ENCODE measurements at regions of chr19 and their contacts with region 1.

Region 1: DNA sequence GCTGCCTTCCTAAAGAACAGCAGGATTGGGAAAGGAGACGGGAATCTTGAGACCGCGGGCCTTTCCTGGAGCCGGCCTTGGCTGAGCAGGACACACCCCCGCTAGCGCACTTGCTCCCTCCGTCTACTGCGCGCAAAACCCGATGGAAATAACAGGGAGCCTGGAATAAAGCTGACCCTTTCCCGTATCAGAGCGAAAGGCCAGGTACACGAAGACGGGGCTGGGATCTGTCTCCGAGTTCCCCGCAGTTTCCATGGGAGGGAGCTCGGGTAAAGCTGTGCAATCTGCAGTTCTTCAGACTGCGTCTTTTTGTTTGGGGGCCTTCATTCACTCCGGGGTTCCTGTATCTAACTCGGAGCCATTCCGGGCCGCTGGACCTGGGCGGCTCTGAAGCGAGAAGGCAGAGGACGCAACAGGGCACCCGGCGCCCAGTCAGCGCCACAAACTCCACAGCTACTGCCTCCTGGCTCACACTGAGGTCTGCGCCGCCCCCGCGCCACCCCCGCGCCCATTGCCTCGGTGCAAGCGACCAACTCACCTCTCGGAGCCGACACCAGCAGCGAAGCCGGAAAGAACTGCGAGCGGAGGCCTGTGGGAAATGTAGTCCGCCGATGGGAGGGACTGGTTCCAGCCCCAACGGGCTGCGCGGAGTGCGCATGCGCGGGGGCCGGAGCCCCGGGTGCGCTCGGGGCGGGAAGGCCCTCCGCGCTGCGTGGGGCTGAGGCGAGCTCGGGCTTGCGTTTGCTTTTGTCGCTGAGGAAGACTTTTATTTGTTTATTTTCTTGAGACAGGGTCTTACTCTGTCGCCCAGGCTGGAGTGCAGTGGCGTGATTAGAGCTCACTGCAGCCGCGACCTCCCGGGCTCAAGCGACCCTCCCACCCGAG is at the start of gene ZFP14:
- DNase-seq: peak; percentile 92 to 96 (median 95)
- H3K4me3 ChIP-seq: peak within 1 kb of the TSS; percentile 76 to 87
- H3K4me3 Mint-ChIP-seq: peak within 1 kb of the TSS; percentile 87 to 96 (median 94)
- H3K27ac ChIP-seq: peak within 1 kb of the TSS; percentile 76
- H3K27ac Mint-ChIP-seq: peak within 1 kb of the TSS; percentile 81 to 97 (median 93)
- H3K4me1 ChIP-seq: peaks cover 18% of the 10 kb centered on the region
- H3K4me1 Mint-ChIP-seq: peaks cover 13 to 34% (median 18%) of the 10 kb centered on the region in 4 donors
- H3K27me3 ChIP-seq: no peaks in the 10 kb centered on the region
- H3K27me3 Mint-ChIP-seq: no peaks in the 10 kb centered on the region
- total RNA-seq, gene ZFP14: 20.7 to 21.2 TPM

Region 2: GRCh38 chr19:36257520-36257876 is 121.4 kb before region 1 on chr19:
- CTCF ChIA-PET with region 1: no interaction called
- POLR2A ChIA-PET with region 1: no interaction called
- intact Hi-C with region 1: no loop called
- DNase-seq: no peak
- H3K4me3 ChIP-seq: no peak overlapping the region
- H3K4me3 Mint-ChIP-seq: no peak overlapping the region
- H3K27ac ChIP-seq: no peak overlapping the region
- H3K27ac Mint-ChIP-seq: no peak overlapping the region
- H3K4me1 ChIP-seq: no peaks in the 10 kb centered on the region
- H3K4me1 Mint-ChIP-seq: no peaks in the 10 kb centered on the region
- H3K27me3 ChIP-seq: no peaks in the 10 kb centered on the region
- H3K27me3 Mint-ChIP-seq: peaks cover 0 to 1% of the 10 kb centered on the region in 2 donors

Region 3: GRCh38 chr19:36418287-36419001 is 39.6 kb after region 1 on chr19 and contains the start of gene ZFP82:
- CTCF ChIA-PET with region 1: no interaction called
- POLR2A ChIA-PET with region 1: interaction called, 4 read pairs
- intact Hi-C with region 1: loop called (anchors 1 kb)
- DNase-seq: peak; percentile 47 to 81 (median 76)
- H3K4me3 ChIP-seq: peak within 1 kb of the TSS; percentile 71 to 82
- H3K4me3 Mint-ChIP-seq: peak within 1 kb of the TSS; percentile 81 to 93 (median 92)
- H3K27ac ChIP-seq: peak within 1 kb of the TSS; percentile 73
- H3K27ac Mint-ChIP-seq: peak within 1 kb of the TSS; percentile 78 to 97 (median 96)
- H3K4me1 ChIP-seq: peaks cover 15% of the 10 kb centered on the region
- H3K4me1 Mint-ChIP-seq: peaks cover 11 to 28% (median 20%) of the 10 kb centered on the region in 4 donors
- H3K27me3 ChIP-seq: no peaks in the 10 kb centered on the region
- H3K27me3 Mint-ChIP-seq: peaks cover 9 to 19% of the 10 kb centered on the region in 2 donors
- total RNA-seq, gene ZFP82: 8.2 to 8.6 TPM

Region 4: GRCh38 chr19:37077934-37078725 is 699.3 kb after region 1 on chr19 and contains the start of gene ZNF420:
- CTCF ChIA-PET with region 1: interaction called, 4 read pairs
- POLR2A ChIA-PET with region 1: interaction called, 5 read pairs
- intact Hi-C with region 1: loop called (anchors 1 kb)
- DNase-seq: peak; percentile 85 to 92 (median 87)
- H3K4me3 ChIP-seq: peak within 1 kb of the TSS; percentile 61 to 88
- H3K4me3 Mint-ChIP-seq: peak within 1 kb of the TSS; percentile 90 to 100 (median 98)
- H3K27ac ChIP-seq: peak within 1 kb of the TSS; percentile 73
- H3K27ac Mint-ChIP-seq: peak within 1 kb of the TSS; percentile 85 to 99 (median 95)
- H3K4me1 ChIP-seq: peaks cover 23% of the 10 kb centered on the region
- H3K4me1 Mint-ChIP-seq: peaks cover 22 to 43% (median 27%) of the 10 kb centered on the region in 4 donors
- H3K27me3 ChIP-seq: no peaks in the 10 kb centered on the region
- H3K27me3 Mint-ChIP-seq: no peaks in the 10 kb centered on the region
- total RNA-seq, gene ZNF420: 25.0 to 28.6 TPM

Region 5: GRCh38 chr19:37779127-37780005 is 1400.5 kb after region 1 on chr19 and contains the start of gene ZNF573:
- CTCF ChIA-PET with region 1: no interaction called
- POLR2A ChIA-PET with region 1: no interaction called
- intact Hi-C with region 1: loop called (anchors 1 kb)
- DNase-seq: peak; percentile 87 to 99 (median 91)
- H3K4me3 ChIP-seq: peak within 1 kb of the TSS; percentile 74 to 89
- H3K4me3 Mint-ChIP-seq: peak within 1 kb of the TSS; percentile 90 to 99 (median 94)
- H3K27ac ChIP-seq: peak within 1 kb of the TSS; percentile 90
- H3K27ac Mint-ChIP-seq: peak within 1 kb of the TSS; percentile 86 to 100 (median 98)
- H3K4me1 ChIP-seq: peaks cover 18% of the 10 kb centered on the region
- H3K4me1 Mint-ChIP-seq: peaks cover 24 to 46% (median 35%) of the 10 kb centered on the region in 4 donors
- H3K27me3 ChIP-seq: no peaks in the 10 kb centered on the region
- H3K27me3 Mint-ChIP-seq: no peaks in the 10 kb centered on the region
- total RNA-seq, gene ZNF573: 30.5 to 31.1 TPM

Measured in CD4-positive, alpha-beta memory T cell (primary cell).